Transverse colon (tissue), 4 donors: ENCODE measurements at regions of chr12 and their contacts with region 1.

Region 1: DNA sequence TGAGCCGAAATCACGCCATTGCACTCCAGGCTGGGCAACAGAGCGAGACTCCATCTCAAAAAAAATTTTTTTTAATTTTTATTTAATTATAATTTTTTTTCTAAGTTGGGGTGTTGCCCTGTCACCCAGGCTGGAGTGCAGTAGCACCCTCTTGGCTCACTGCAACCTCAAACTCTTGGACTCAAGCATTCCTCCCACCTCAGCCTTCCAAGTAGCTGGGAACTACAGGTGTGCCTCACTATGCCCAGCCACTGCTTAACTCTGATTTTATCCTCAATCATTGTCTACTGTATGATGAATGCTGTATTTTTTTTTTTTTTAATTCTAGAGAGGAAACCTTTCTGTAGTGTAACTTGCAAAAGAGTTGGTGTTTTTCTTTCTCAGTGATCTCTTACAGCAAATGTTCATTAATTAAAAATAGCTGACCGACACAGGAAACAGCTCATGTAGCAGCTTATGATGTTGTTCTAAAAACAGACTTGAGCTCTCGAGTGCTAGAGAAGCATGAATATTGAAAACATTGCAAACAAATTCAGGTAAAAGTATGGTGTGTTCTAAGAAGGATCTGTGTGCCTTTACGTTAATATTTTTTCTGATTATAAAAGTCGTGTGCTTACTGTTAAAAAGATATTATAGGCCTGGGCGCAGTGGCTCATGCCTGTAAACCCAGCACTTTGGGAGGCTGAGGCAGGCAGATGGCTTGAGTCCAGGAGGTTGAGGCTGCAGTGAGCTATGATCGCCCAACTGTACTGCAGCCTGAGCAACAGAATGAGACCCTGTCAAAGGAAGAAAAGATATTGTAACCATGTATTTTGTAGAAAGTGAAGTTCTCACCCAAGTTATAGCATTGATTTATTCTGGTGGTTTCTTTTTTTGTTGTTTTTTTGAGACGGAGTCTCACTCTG is 68.9 kb downstream of the FGD4 start:
- DNase-seq: no peak
- H3K4me3 ChIP-seq: no peak overlapping the region
- H3K27ac ChIP-seq: no peak overlapping the region
- H3K4me1 ChIP-seq: peaks cover 0 to 12% (median 5%) of the 10 kb centered on the region in 4 donors
- H3K27me3 ChIP-seq: no peaks in the 10 kb centered on the region
- CTCF ChIP-seq: no peak
- EP300 ChIP-seq: no peak
- POLR2A ChIP-seq: no peak

Region 2: DNA sequence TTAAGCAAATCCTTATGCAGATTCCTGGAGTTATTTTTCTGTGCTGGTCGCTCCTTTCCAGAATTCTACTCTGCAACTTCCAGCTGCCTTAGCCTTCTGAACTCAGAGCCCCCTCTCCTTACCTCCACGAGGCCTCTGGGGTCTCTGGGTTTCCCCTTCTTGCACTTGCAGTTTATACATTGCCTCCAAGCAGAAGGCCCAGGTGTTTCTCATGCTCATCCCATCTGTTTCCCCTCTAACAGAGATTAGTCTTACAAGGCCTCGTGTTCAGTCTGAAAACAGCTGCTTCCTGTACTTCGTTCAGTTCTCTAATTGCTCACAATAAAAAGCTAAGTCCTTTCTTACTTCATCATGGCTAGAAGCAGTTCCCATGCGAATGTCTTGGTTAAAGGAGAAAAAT is 203.2 kb before region 1 on chr12:
- in situ Hi-C with region 1: no loop called
- intact Hi-C with region 1: no loop called
- DNase-seq: no peak
- H3K4me3 ChIP-seq: no peak overlapping the region
- H3K27ac ChIP-seq: no peak overlapping the region
- H3K4me1 ChIP-seq: no peaks in the 10 kb centered on the region
- H3K27me3 ChIP-seq: no peaks in the 10 kb centered on the region
- CTCF ChIP-seq: no peak
- EP300 ChIP-seq: no peak
- POLR2A ChIP-seq: no peak

Region 3: DNA sequence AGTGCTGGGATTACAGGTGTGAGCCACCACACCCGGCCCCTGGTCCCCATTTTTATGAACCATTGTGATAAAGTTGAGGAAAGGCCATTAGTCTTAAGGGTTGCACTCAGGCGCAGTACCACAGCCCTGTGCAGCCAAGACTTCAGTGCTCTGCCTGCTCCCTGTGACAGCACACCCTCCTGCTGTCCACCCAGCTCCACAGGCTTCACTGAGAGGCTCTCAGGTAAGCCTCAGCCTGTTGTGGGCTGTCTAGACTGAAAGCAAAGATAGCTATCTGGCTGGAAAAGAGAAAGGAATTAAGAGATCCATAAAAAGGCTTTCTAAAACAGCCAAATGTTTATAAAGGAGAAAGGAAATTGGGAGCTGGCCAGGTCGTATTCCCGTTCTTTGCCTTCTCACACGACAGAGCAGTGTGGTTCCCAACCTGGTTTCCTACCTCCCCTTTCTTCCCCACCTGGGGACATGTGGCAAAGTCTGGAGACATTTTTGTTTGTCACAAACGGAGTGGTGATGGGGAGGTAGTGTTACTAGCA is 191.8 kb after region 1 on chr12:
- in situ Hi-C with region 1: no loop called
- intact Hi-C with region 1: loop called (anchors 10 kb)
- DNase-seq: no peak
- H3K4me3 ChIP-seq: no peak overlapping the region
- H3K27ac ChIP-seq: peak overlapping the region in 2 of 4 donors; percentile 13 to 24
- H3K4me1 ChIP-seq: peaks cover 0 to 10% (median 5%) of the 10 kb centered on the region in 4 donors
- H3K27me3 ChIP-seq: no peaks in the 10 kb centered on the region
- CTCF ChIP-seq: no peak
- EP300 ChIP-seq: no peak
- POLR2A ChIP-seq: no peak

Region 4: GRCh38 chr12:33639975-33640374 is 1171.8 kb after region 1 on chr12:
- in situ Hi-C with region 1: no loop called
- intact Hi-C with region 1: loop called (anchors 5 kb)
- DNase-seq: no peak
- H3K4me3 ChIP-seq: no peak overlapping the region
- H3K27ac ChIP-seq: no peak overlapping the region
- H3K4me1 ChIP-seq: no peaks in the 10 kb centered on the region
- H3K27me3 ChIP-seq: no peaks in the 10 kb centered on the region
- CTCF ChIP-seq: no peak
- EP300 ChIP-seq: no peak
- POLR2A ChIP-seq: no peak